OCI-LY7 (cell line): ENCODE measurements at regions of chr9 and their contacts with region 1.

Region 1: GRCh38 chr9:75265525-75265972 is 177.2 kb downstream of the OSTF1 start:
- DNase-seq: peak; percentile 57
- H3K4me3 ChIP-seq: no peak overlapping the region
- H3K27ac ChIP-seq: no peak overlapping the region
- H3K4me1 ChIP-seq: no peaks in the 10 kb centered on the region
- CTCF ChIP-seq: peak; percentile 99

Region 2: GRCh38 chr9:75197561-75197960 is 68.0 kb before region 1 on chr9:
- CTCF ChIA-PET with region 1: no interaction called
- POLR2A ChIA-PET with region 1: no interaction called
- intact Hi-C with region 1: no loop called
- DNase-seq: no peak
- H3K4me3 ChIP-seq: no peak overlapping the region
- H3K27ac ChIP-seq: no peak overlapping the region
- H3K4me1 ChIP-seq: no peaks in the 10 kb centered on the region
- CTCF ChIP-seq: no peak

Region 3: GRCh38 chr9:75864266-75864665 is 598.7 kb after region 1 on chr9:
- CTCF ChIA-PET with region 1: no interaction called
- POLR2A ChIA-PET with region 1: interaction called, 3 read pairs
- intact Hi-C with region 1: loop called (anchors 5 kb)
- DNase-seq: no peak
- H3K4me3 ChIP-seq: no peak overlapping the region
- H3K27ac ChIP-seq: no peak overlapping the region
- H3K4me1 ChIP-seq: no peaks in the 10 kb centered on the region
- CTCF ChIP-seq: no peak

Region 4: DNA sequence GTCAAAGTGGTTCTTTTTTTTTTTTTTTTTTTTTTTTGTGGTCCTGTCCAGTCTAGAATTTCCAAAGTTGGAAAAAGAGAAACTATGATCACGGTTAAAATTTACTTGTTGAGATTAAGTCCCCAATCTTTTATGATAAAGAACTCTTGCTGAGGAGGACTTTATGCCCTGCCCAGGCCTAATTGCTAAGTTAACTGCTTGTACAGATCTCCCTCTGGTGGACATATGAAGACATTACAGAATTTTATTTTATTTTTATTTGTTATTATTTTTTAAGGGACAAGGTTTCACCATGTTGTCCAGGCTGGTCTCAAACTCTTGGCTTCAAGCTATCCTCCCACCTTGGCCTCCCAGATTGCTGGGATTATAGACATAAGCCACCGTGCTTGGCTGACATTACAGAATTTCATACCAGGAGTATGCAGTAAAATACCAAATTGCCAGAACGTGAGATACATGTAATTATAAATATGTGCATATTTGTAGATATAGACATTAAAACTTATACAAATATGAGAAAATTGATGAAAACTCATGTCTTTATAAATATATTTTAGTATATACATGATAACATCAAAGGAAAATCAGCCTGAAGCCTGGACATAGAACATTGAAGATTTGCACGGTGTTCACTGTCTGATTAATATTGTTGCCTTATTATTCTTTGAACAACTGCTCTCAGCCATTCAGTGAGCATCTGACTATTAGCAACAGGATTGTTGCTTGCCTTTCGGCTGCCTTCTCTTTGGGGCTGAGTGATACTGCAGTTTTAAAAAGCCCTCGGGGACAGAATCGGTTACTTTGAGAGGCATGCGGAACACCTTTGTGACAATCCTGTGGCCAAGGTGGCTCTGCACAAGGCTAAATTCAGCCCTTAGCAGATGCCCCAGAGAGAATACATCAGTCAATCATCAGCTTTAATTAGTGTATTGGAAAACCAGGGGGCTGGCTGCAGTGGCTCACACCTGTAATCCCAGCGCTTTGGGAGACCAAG is 1037.7 kb after region 1 on chr9:
- CTCF ChIA-PET with region 1: no interaction called
- POLR2A ChIA-PET with region 1: no interaction called
- intact Hi-C with region 1: loop called (anchors 5 kb)
- DNase-seq: peak; percentile 70
- H3K4me3 ChIP-seq: no peak overlapping the region
- H3K27ac ChIP-seq: no peak overlapping the region
- H3K4me1 ChIP-seq: no peaks in the 10 kb centered on the region
- CTCF ChIP-seq: peak; percentile 83